ENCODE measurements at regions of chr19 and their contacts with region 1.

Region 1: GRCh38 chr19:46661020-46661731 is at the start of gene DACT3:
- DNase-seq: peak; percentile 100
- ATAC-seq: peak; percentile 94
- H3K4me3 Mint-ChIP-seq: peak within 1 kb of the TSS; percentile 71
- H3K27ac Mint-ChIP-seq: peak within 1 kb of the TSS; percentile 80
- H3K4me1 Mint-ChIP-seq: peaks cover 21% of the 10 kb centered on the region
- H3K27me3 Mint-ChIP-seq: peaks cover 24% of the 10 kb centered on the region
- total RNA-seq, gene DACT3: 0.42 TPM

Region 2: DNA sequence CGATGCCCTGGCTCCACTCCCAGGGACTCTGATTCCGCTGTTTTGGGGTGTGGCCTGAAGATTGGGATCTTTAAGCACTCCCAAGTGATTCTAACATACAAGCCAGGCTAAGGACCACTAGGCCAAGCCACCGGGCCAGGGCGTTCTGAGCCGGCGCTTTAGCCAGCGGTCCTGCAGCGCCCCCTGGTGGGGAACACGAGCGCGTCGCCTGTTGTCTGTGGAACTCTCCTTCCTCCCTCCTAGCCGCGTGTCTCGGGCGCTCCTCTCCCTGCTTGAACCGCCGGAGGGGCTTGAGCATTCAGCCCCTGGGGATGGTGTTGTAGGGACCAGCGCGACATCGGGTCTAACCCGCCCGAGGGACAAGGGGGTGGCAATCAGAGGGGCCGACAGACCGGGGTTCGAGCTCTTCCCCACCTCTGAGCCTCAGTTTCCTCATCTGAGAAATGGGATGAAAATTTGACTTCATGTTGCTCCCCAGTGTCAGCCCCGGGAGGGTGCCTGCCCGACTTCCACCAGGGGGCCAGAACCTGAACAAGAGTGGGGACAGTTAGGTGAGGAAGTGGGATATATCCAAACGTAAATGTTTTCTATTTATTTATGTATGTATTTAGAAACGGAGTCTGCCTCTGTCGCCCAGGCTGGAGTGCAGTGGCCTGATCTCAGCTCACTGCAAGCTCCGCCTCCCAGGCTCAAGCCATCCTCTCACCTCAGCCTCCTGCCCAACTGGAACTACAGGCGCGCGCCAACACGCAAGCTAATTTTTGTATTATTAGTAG is 147.5 kb before region 1 on chr19:
- CTCF ChIA-PET with region 1: interaction called, 14 read pairs
- POLR2A ChIA-PET with region 1: no interaction called
- DNase-seq: peak; percentile 86
- ATAC-seq: peak; percentile 89
- H3K4me3 Mint-ChIP-seq: no peak overlapping the region
- H3K27ac Mint-ChIP-seq: no peak overlapping the region
- H3K4me1 Mint-ChIP-seq: peaks cover 20% of the 10 kb centered on the region
- H3K27me3 Mint-ChIP-seq: peaks cover 14% of the 10 kb centered on the region

Region 3: DNA sequence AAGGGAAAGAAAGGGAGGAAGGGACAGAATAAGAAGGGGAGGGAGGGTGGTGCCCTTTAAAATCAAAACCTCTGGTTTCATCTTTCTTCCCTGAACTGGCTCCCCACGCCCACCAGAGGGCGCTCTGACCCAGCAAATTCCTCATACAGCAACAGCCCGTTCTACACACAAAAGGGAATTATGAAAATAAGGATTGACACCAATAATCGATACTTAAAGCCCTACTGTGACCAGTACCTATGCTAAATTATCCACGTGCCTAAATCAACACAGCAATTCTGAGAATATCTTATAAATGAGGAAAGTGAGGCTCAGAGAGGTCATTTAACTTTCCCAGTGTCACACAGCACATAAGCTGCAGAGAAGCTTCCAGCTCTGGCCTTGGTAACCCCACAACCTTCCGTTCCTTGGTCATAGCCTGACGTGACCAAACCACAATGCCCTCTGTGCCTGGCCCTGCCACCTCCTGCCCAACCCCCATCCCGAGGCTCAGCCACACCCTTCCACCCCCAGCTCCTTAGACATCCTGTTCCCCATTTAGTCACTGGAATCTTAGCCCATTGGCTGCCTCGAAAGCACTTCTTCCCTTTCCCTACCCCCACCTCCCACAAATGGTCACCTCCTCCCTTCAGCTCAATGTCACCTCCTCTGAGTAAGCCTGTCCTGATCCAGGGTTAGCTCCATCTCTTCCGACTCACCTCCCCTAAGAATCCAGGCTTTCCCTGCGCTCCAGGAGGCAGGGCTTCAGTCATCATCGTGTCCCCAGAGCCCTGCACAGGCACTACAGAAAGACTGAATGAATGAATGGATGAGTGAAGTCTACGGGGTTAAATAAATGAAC is 131.3 kb before region 1 on chr19:
- CTCF ChIA-PET with region 1: interaction called, 52 read pairs
- POLR2A ChIA-PET with region 1: interaction called, 8 read pairs
- DNase-seq: peak; percentile 81
- ATAC-seq: peak; percentile 81
- H3K4me3 Mint-ChIP-seq: peak overlapping the region; percentile 25
- H3K27ac Mint-ChIP-seq: peak overlapping the region; percentile 82
- H3K4me1 Mint-ChIP-seq: peaks cover 38% of the 10 kb centered on the region
- H3K27me3 Mint-ChIP-seq: no peaks in the 10 kb centered on the region

Region 4: DNA sequence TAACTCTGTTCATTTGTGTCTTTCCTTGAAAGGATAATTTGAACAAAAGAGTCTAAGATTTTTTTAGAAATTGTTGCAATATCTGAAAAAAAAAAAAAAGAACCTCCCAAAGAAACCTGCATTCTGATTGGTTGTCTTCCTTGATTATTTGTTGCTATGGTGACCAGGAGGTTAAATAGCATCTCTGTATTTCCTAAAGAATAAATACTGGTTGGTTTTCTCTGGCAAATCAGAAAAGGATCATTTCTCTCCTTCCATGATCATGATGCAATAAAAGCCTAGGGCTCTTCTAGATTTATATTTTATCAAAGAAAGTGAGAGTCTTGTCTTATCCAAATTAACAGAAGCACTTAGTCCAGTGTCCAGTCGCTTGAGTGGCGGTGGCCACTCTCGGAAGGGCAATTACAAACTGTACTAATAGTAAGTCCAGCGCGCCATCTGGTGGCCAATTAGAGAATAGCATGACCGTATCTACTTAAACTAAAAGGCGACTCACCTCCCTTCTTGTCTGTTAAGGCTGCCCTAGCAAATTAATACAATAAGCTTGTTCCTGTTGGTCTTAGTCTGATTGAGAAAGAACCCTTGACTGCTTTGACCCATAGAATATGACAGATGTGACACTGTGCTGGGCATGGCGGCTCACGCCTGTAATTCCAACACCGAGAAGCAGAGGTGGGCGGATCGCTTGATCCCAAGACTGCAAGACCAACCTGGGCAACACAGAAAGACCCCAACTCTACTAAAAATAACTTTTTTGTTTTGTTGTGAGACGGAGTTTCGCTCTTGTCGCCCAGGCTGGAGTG is 118.5 kb before region 1 on chr19:
- CTCF ChIA-PET with region 1: interaction called, 14 read pairs
- POLR2A ChIA-PET with region 1: no interaction called
- DNase-seq: peak; percentile 90
- ATAC-seq: peak; percentile 62
- H3K4me3 Mint-ChIP-seq: no peak overlapping the region
- H3K27ac Mint-ChIP-seq: no peak overlapping the region
- H3K4me1 Mint-ChIP-seq: peaks cover 12% of the 10 kb centered on the region
- H3K27me3 Mint-ChIP-seq: peaks cover 3% of the 10 kb centered on the region

Region 5: GRCh38 chr19:46607448-46607841 is 53.7 kb before region 1 on chr19:
- CTCF ChIA-PET with region 1: interaction called, 350 read pairs
- POLR2A ChIA-PET with region 1: interaction called, 26 read pairs
- DNase-seq: no peak
- ATAC-seq: no peak
- H3K4me3 Mint-ChIP-seq: no peak overlapping the region
- H3K27ac Mint-ChIP-seq: peak overlapping the region; percentile 44
- H3K4me1 Mint-ChIP-seq: peaks cover 78% of the 10 kb centered on the region
- H3K27me3 Mint-ChIP-seq: no peaks in the 10 kb centered on the region

Region 6: GRCh38 chr19:46624958-46625661 is 36.1 kb before region 1 on chr19 and contains the start of gene PTGIR:
- CTCF ChIA-PET with region 1: interaction called, 350 read pairs
- POLR2A ChIA-PET with region 1: interaction called, 3 read pairs
- DNase-seq: peak; percentile 46
- ATAC-seq: peak; percentile 40
- H3K4me3 Mint-ChIP-seq: peak within 1 kb of the TSS; percentile 74
- H3K27ac Mint-ChIP-seq: peak within 1 kb of the TSS; percentile 84
- H3K4me1 Mint-ChIP-seq: peaks cover 65% of the 10 kb centered on the region
- H3K27me3 Mint-ChIP-seq: no peaks in the 10 kb centered on the region
- total RNA-seq, gene PTGIR: 8.8 to 10.4 TPM

Region 7: GRCh38 chr19:46674416-46675183 is 13.4 kb after region 1 on chr19:
- CTCF ChIA-PET with region 1: interaction called, 14 read pairs
- POLR2A ChIA-PET with region 1: no interaction called
- DNase-seq: no peak
- ATAC-seq: no peak
- H3K4me3 Mint-ChIP-seq: no peak overlapping the region
- H3K27ac Mint-ChIP-seq: no peak overlapping the region
- H3K4me1 Mint-ChIP-seq: peaks cover 13% of the 10 kb centered on the region
- H3K27me3 Mint-ChIP-seq: no peaks in the 10 kb centered on the region

Region 8: GRCh38 chr19:46692918-46693722 is 31.9 kb after region 1 on chr19:
- CTCF ChIA-PET with region 1: no interaction called
- POLR2A ChIA-PET with region 1: no interaction called
- DNase-seq: no peak
- ATAC-seq: no peak
- H3K4me3 Mint-ChIP-seq: no peak overlapping the region
- H3K27ac Mint-ChIP-seq: peak overlapping the region; percentile 1
- H3K4me1 Mint-ChIP-seq: no peaks in the 10 kb centered on the region
- H3K27me3 Mint-ChIP-seq: no peaks in the 10 kb centered on the region